ENCODE measurements at regions of chr17 and their contacts with region 1.

Region 1: DNA sequence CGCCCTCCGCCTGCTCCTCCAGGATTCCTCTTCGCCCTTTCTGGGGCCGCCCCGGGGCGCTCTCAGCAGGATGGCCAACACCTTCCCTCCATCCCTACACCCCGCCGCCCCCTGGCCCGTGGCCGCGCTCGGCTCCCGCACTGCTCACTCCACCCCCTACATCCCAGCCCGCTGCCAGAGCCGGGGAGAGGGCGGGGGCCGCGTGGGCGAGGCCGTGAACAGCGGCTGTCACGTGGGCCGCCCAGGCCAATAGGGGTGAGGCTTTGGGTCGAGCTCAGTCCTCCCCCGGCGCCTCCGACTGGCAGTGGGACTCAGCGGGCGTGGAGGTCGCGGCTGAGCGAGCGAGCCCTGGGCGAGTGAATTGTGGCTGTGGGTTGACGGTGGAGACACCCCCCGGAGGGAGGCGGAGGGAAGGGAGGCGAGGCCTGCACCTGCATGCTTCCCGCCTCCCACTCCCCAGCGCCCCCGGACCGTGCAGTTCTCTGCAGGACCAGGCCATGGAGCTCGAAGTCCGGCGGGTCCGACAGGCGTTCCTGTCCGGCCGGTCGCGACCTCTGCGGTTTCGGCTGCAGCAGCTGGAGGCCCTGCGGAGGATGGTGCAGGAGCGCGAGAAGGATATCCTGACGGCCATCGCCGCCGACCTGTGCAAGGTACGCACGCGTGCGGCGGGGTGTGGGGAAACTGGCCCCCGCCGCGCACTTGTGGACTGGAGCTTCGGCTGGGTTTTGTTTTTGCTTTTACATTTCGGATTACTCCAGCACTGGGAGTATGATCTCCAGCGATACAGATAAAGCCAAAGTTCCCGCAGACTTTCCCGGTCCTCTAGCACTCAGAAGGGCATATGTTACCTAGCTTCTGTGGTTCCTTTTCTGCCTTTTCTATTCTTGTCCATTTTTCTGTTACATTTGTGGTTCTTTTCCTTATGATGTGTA is at the start of gene ALDH3A2:
- DNase-seq: peak; percentile 98 to 99 (median 99)
- ATAC-seq: peak; percentile 99
- H3K4me3 ChIP-seq: peak within 1 kb of the TSS; percentile 59 to 97 (median 82)
- H3K27ac ChIP-seq: peak within 1 kb of the TSS; percentile 74 to 99 (median 95)
- H3K4me1 ChIP-seq: peaks cover 0 to 60% (median 46%) of the 10 kb centered on the region in 12 donors
- H3K27me3 ChIP-seq: no peaks in the 10 kb centered on the region
- CTCF ChIP-seq: peak in 4 of 12 donors; percentile 18 to 41 (median 25)
- POLR2A ChIP-seq: peak; percentile 58 to 98
- total RNA-seq, gene ALDH3A2: 57.0 to 129 (median 83.2) TPM

Region 2: DNA sequence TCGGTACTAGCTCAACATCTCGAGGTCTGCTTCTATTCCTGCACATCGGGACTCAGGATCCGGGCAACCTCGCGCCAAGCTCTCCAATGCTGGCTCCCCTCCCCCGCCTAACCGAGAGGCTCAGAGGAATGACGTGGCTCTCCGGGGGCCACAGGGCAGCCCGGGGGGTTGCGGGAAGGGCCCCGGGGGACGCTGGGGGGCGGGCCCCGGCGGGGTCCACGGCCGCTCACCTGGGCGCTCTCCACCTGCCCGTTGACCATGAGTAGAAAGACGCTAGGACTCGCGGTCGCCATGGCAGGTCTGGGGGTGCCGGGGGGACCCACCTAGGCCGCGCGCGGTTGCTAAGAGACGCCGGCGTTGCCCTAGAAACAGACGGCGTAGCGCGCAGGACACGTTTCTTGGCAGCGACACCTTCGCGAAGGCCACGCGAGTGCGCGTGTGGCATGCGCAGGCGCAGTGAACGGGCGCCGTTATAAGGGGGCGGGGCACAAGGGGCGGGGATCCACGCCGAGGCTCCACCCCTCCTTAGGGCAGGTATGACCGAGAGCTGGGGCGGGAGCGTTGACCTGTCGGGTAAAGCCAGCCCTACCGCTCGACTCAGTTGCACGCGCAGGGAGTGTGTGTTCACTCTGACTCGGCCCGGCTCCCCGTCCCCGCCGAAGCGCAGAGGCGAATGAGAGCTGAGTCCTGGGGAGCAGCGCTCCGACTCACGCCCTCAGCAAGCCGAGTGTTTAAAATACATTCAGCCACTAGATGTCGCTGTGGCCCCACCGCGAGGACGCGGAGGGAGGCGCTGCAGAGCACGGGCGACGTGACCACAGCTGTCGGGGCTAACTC is 286.2 kb before region 1 on chr17 and contains the start of gene B9D1:
- intact Hi-C with region 1: loop called in 2 of 10 experiments (anchors 10 kb)
- DNase-seq: peak; percentile 90 to 97 (median 93)
- ATAC-seq: peak; percentile 93 to 97 (median 96)
- H3K4me3 ChIP-seq: peak within 1 kb of the TSS; percentile 58 to 87 (median 79)
- H3K27ac ChIP-seq: peak within 1 kb of the TSS in 11 of 12 donors; percentile 48 to 88 (median 75)
- H3K4me1 ChIP-seq: peaks cover 0 to 20% (median 12%) of the 10 kb centered on the region in 12 donors
- H3K27me3 ChIP-seq: peaks cover 0 to 2% (median 0%) of the 10 kb centered on the region in 9 donors
- CTCF ChIP-seq: peak; percentile 96 to 100 (median 98)
- POLR2A ChIP-seq: peak in 1 of 2 donors; percentile 50
- total RNA-seq, gene B9D1: 5.6 to 27.9 (median 10.8) TPM

Region 3: GRCh38 chr17:19507775-19508576 is 140.8 kb before region 1 on chr17:
- intact Hi-C with region 1: loop called in 7 of 10 experiments (anchors 2 to 10 kb)
- DNase-seq: peak; percentile 81 to 89 (median 89)
- ATAC-seq: peak; percentile 79 to 94 (median 92)
- H3K4me3 ChIP-seq: peak overlapping the region; percentile 45 to 82 (median 70)
- H3K27ac ChIP-seq: peak overlapping the region; percentile 65 to 94 (median 80)
- H3K4me1 ChIP-seq: peaks cover 0 to 13% (median 0%) of the 10 kb centered on the region in 12 donors
- H3K27me3 ChIP-seq: no peaks in the 10 kb centered on the region
- CTCF ChIP-seq: no peak
- POLR2A ChIP-seq: peak in 1 of 2 donors; percentile 27

Region 4: DNA sequence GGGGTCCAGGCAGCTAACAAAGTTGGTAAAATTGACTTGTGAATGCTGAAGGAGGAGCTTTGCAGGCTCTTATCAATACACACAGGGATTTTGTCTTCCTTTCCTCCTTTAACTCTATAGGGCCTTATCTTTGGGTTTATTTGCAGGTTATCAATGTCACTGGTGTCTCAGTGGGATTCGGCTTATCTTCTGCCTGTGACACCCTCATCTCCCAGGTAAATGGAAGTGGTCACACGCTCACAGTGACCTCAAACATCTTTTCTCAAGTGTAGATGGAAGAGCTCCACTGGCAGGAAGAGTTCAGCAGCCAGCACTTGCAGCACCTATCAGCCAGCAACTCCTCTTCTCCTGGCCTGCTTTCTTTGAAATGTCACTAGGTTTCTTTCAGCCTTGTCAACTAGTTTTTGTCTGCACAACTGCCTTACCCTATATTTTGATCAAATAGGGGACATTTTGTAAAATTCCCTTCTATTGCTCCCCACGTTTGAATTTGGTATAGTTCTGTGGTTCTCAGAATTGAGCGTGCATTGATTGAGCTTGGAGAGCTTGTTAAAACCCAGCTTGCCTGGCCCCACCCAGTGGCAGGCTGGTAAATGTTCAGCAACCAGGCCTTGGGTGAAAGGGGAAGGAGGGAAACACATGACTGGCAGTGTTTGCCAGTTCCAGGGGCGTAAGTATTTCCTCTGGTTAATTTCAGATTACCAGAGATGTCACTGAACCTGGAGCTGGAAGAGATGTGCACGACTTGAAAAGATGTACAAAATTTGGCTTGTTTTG is 102.3 kb before region 1 on chr17:
- intact Hi-C with region 1: loop called in 1 of 10 experiments (anchors 10 kb)
- DNase-seq: peak in 4 of 5 donors; percentile 26 to 68 (median 47)
- ATAC-seq: peak; percentile 56 to 83 (median 79)
- H3K4me3 ChIP-seq: no peak overlapping the region
- H3K27ac ChIP-seq: peak overlapping the region in 5 of 12 donors; percentile 29 to 71 (median 46)
- H3K4me1 ChIP-seq: peaks cover 0 to 30% (median 5%) of the 10 kb centered on the region in 12 donors
- H3K27me3 ChIP-seq: no peaks in the 10 kb centered on the region
- CTCF ChIP-seq: peak in 8 of 12 donors; percentile 11 to 43 (median 28)
- POLR2A ChIP-seq: no peak

Region 5: DNA sequence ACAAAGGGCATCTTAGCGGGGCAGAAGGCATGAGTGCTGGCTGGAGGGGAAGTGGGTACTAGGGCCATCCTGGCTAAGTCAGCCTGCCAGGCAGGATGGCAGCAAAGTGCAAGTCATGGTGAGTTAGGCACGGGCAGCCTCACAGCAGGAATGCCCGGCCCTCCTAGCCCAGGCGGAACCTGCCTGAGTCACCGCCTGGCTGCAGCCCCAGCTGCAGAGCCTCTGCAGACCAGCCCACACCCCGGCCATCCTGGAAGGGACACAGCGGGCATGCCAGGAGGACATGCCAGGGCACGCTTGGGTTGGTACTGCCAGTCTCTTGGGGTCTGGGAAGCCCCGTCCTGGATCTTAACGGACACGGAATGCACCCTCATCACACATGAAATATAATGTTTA is 104.3 kb after region 1 on chr17:
- intact Hi-C with region 1: loop called in 5 of 10 experiments (anchors 2 to 10 kb)
- DNase-seq: peak; percentile 66 to 86 (median 73)
- ATAC-seq: peak; percentile 92 to 98 (median 96)
- H3K4me3 ChIP-seq: no peak overlapping the region
- H3K27ac ChIP-seq: peak overlapping the region; percentile 36 to 86 (median 60)
- H3K4me1 ChIP-seq: peaks cover 0 to 15% (median 2%) of the 10 kb centered on the region in 12 donors
- H3K27me3 ChIP-seq: no peaks in the 10 kb centered on the region
- CTCF ChIP-seq: no peak
- POLR2A ChIP-seq: no peak

Measured in heart left ventricle (tissue), 16 donors.